Colonic mucosa (tissue), 4 donors: ENCODE measurements at regions of chr10 and their contacts with region 1.

Region 1: DNA sequence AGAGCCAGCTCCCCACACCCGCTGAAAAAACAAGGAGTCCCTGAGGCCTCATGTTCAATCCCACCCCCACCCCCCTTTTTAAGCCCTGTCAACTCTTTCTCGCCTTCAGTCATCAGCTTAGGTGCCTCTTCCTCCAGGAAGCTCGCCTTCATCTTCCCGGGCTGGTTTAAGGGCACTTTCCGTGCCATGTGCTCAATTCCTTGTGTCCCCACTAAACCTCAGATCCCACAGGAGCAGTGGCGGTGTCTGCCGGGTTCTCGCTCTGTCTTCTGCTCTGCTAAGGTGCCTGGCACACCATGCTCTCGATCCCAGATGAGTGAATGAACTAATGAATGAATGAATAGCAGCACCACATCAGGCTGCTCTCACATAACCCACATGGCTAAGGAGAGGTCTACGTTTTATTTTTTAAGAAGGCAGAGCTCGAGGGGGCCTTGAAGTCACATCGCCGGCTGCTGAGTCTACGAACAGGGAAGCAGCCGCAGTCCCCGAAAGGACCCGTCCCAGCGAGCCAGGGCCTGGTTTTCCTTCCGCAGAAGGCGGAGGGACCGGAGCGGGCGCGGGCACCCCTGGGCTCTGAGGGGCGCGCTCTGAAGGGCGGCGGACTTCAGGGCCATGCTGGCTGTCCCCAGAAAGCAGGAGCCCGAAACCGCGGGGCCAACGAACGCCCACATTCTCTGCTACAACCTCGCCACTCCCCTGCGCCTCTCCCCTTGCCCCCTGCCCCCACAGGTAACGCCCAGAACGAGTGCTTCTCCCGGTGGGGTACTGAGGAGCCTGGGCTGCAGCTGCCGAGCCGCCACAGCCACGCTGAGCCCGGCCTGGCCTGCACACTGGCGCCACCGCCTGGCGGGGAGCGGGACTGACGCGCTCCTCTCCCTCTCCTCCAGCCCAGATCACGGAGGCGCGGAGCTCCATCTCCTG is 73.4 kb upstream of the KCNMA1 start:
- DNase-seq: peak; percentile 79
- H3K4me3 ChIP-seq: peak overlapping the region; percentile 34
- H3K27ac ChIP-seq: no peak overlapping the region
- H3K4me1 ChIP-seq: no peaks in the 10 kb centered on the region
- H3K27me3 ChIP-seq: peaks cover 6% of the 10 kb centered on the region
- CTCF ChIP-seq: peak; percentile 94

Region 2: GRCh38 chr10:77179015-77179695 is 531.9 kb before region 1 on chr10:
- intact Hi-C with region 1: loop called (anchors 5 kb)
- DNase-seq: no peak
- H3K4me3 ChIP-seq: no peak overlapping the region
- H3K27ac ChIP-seq: no peak overlapping the region
- H3K4me1 ChIP-seq: no peaks in the 10 kb centered on the region
- H3K27me3 ChIP-seq: no peaks in the 10 kb centered on the region
- CTCF ChIP-seq: no peak

Region 3: DNA sequence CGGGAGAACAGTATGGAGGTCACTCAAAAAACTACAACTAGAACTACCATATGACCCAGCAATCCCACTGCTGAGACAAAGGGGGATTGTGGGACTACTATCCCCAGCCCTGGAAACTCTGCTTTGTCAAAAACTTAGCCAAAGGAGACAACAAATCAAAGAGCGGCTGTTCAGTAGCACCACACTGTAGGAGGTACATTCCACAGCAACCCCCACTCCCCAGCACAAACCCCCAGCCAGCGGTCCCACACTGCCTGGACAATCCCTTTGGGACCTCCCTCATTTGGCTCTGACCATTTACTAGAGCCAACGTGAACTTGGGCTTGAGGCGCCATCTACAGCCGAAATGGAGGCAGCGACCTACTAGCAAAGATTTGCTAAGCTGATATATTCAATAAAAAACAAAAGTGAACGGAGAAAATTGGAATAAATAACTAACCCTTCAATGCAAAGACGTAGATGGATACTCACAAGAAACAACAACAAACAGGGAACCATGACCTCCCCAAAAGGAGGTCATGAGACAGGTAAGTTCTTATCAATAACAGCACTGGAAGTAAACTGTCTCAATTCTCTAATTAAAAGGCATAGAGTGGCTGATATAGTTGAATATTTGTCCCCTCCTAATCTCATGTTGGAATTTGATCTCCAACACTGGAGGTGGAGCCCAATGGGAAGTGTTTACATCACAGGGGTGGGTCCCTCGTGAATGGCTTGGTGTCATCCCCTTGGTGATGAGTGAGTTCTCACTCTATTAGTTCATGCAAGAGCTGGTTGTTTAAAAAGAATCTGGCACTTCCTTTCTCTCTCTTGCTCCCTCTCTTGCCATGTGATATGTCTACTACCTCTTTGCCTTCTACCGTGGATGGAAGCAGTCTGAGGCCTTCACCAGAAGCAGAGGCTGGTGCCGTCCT is 45.6 kb after region 1 on chr10:
- intact Hi-C with region 1: loop called (anchors 5 kb)
- DNase-seq: peak; percentile 44
- H3K4me3 ChIP-seq: no peak overlapping the region
- H3K27ac ChIP-seq: no peak overlapping the region
- H3K4me1 ChIP-seq: no peaks in the 10 kb centered on the region
- H3K27me3 ChIP-seq: no peaks in the 10 kb centered on the region
- CTCF ChIP-seq: peak; percentile 43